Activated CD8-positive, alpha-beta memory T cell treated with anti-CD3 and anti-CD28 coated beads, Interleukin-2, amount 10 ng/mL, durations not matched to agents 7 days and 5 days (primary cell): ENCODE measurements at regions of chr2 and their contacts with region 1.

Region 1: GRCh38 chr2:234544659-234545611 is 48.1 kb upstream of the ARL4C start:
- DNase-seq: peak; percentile 85
- ATAC-seq: peak; percentile 95
- H3K4me3 Mint-ChIP-seq: no peak overlapping the region
- H3K27ac Mint-ChIP-seq: no peak overlapping the region
- H3K4me1 Mint-ChIP-seq: no peaks in the 10 kb centered on the region
- H3K27me3 Mint-ChIP-seq: peaks cover 26% of the 10 kb centered on the region

Region 2: GRCh38 chr2:234355021-234355720 is 189.8 kb before region 1 on chr2:
- CTCF ChIA-PET with region 1: no interaction called
- DNase-seq: no peak
- ATAC-seq: no peak
- H3K4me3 Mint-ChIP-seq: no peak overlapping the region
- H3K27ac Mint-ChIP-seq: no peak overlapping the region
- H3K4me1 Mint-ChIP-seq: peaks cover 18% of the 10 kb centered on the region
- H3K27me3 Mint-ChIP-seq: no peaks in the 10 kb centered on the region

Region 3: GRCh38 chr2:234533626-234534025 is 11.3 kb before region 1 on chr2:
- CTCF ChIA-PET with region 1: interaction called, 11 read pairs
- DNase-seq: no peak
- ATAC-seq: no peak
- H3K4me3 Mint-ChIP-seq: no peak overlapping the region
- H3K27ac Mint-ChIP-seq: no peak overlapping the region
- H3K4me1 Mint-ChIP-seq: peaks cover 7% of the 10 kb centered on the region
- H3K27me3 Mint-ChIP-seq: peaks cover 17% of the 10 kb centered on the region

Region 4: DNA sequence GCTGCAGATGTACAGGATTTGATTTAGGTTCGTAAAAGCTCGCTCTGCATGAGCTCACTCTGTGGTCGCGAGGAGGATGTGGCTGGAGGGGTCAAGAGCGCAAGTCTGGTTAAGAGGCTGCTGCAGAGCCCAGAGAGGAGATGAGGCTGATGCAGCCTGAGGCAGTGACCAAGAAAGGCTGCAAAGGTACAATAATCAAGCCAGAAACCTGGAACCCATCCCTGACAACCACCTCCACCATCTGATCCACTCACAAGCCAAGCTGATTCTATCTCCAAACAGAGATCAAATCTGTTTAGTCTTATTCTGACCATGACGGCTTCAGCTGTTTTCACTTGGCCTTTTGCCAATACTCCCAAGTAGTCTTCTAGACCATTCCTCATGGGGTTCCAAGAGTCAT is 10.8 kb after region 1 on chr2:
- CTCF ChIA-PET with region 1: interaction called, 19 read pairs
- DNase-seq: peak; percentile 75
- ATAC-seq: peak; percentile 66
- H3K4me3 Mint-ChIP-seq: no peak overlapping the region
- H3K27ac Mint-ChIP-seq: no peak overlapping the region
- H3K4me1 Mint-ChIP-seq: peaks cover 18% of the 10 kb centered on the region
- H3K27me3 Mint-ChIP-seq: peaks cover 11% of the 10 kb centered on the region